ENCODE measurements at regions of chr1 and their contacts with region 1.

Region 1: GRCh38 chr1:96214982-96215381 is 506.6 kb upstream of the PTBP2 start:
- DNase-seq: no peak
- ATAC-seq: no peak
- H3K4me3 ChIP-seq: no peak overlapping the region
- H3K27ac ChIP-seq: no peak overlapping the region
- H3K4me1 ChIP-seq: no peaks in the 10 kb centered on the region
- H3K27me3 ChIP-seq: no peaks in the 10 kb centered on the region
- CTCF ChIP-seq: no peak

Region 2: DNA sequence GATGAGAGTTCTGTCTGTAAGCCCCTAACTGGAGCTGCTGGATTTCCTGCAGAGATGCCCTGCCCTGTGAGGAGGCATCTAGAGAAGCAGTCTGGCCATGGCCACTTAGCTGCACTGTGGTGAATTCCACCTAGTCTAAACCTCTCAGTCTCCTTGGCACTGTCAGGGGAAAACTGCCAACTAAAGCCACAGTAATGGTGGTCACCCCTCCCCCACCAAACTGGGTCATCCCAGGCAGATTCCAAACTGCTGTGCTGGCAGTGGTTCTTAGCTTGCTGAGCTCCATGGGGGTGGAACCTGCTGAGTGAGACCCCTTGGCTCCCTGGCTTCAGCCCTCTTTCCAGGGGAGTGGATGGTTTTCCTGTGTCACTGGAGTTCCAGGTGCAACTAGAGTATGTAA is 240.4 kb before region 1 on chr1:
- intact Hi-C with region 1: no loop called
- DNase-seq: no peak
- ATAC-seq: no peak
- H3K4me3 ChIP-seq: no peak overlapping the region
- H3K27ac ChIP-seq: no peak overlapping the region
- H3K4me1 ChIP-seq: no peaks in the 10 kb centered on the region
- H3K27me3 ChIP-seq: no peaks in the 10 kb centered on the region
- CTCF ChIP-seq: no peak

Region 3: DNA sequence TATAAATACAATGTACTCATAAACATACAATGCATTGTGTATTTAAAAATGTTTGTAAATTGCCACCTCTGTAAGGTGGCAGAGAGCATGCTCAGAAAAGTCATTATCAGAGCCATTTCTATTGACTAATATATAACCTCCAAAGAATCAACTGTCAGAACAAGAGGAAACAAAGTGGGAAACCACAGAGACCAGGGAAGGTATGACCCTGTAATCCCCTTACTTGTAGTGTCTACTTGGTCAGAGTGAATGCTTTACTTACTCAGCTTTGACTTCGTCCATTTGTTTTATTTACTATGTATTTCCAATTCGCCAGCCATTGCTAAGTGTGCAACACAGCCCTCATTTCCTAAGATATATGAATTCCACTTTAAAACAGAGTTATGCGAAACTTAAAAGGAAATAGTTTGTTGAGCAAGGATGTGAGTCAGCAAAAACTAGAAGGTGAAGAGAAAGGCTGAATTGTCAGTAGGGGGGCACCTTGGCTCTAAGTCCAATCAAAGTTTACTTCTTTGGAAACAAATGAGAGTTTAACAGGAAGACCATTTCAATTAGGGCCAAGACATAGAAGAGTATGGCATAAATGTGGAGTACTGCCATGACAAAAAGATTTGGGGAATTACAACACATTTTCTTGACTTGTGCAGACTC is 165.1 kb before region 1 on chr1:
- intact Hi-C with region 1: no loop called
- DNase-seq: no peak
- ATAC-seq: no peak
- H3K4me3 ChIP-seq: no peak overlapping the region
- H3K27ac ChIP-seq: no peak overlapping the region
- H3K4me1 ChIP-seq: no peaks in the 10 kb centered on the region
- H3K27me3 ChIP-seq: no peaks in the 10 kb centered on the region
- CTCF ChIP-seq: no peak

Region 4: DNA sequence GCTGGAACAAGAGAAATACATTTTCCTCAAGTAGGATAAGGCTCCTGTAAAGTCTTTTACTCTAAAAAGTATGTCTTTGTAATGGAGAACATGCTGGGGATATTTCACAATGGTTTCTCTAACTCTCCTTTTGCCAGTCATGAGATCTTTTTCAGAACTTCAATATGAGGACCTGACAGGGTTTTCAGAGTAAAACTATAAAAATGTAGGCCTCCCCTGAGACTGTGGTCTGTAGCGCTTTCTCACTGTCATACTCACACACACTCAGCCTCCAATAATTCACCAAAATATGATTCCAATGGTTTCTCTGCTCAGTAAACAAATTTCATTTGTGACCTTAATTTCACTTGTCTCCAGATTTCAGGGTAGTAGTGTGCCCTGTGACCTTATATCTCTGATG is 66.5 kb after region 1 on chr1:
- intact Hi-C with region 1: loop called in 1 of 10 experiments (anchors 10 kb)
- DNase-seq: no peak
- ATAC-seq: no peak
- H3K4me3 ChIP-seq: no peak overlapping the region
- H3K27ac ChIP-seq: no peak overlapping the region
- H3K4me1 ChIP-seq: no peaks in the 10 kb centered on the region
- H3K27me3 ChIP-seq: no peaks in the 10 kb centered on the region
- CTCF ChIP-seq: no peak

Region 5: DNA sequence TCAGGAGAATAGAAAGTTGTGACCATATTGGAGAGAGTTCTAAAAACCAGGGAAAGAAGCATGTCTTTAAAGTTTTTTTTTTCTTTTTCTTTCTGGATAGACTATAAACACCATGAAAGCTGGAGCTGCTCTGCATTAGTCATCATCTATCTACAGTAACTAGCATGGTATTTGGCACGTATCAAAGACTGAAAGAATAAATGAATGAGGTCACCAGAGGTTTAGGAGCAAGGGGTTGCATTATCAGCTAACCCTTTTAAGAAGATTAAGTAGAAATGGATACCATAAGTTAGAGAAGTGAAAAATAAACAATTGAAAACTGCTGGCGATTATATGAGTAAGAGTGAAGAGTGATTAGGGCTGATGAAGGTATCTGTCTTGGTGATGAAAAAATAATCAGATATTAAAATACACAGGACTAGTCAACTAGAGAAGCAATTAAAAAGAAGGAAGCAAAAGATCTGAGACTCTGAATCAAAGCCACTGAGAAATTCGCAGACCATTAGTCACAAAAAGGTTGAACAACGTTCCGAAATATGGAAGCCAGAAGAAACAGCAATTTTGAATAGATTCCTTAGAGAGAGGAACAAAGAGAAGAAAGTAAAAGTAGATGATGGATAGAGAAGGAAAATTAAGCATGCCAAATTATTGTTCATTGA is 1169.4 kb after region 1 on chr1:
- intact Hi-C with region 1: no loop called
- DNase-seq: no peak
- ATAC-seq: peak in 4 of 8 donors; percentile 49 to 72 (median 62)
- H3K4me3 ChIP-seq: no peak overlapping the region
- H3K27ac ChIP-seq: no peak overlapping the region
- H3K4me1 ChIP-seq: peaks cover 0 to 10% (median 0%) of the 10 kb centered on the region in 9 donors
- H3K27me3 ChIP-seq: no peaks in the 10 kb centered on the region
- CTCF ChIP-seq: no peak

Measured in heart right ventricle (tissue), 16 donors.